ENCODE measurements at regions of chr2 and their contacts with region 1.

Region 1: DNA sequence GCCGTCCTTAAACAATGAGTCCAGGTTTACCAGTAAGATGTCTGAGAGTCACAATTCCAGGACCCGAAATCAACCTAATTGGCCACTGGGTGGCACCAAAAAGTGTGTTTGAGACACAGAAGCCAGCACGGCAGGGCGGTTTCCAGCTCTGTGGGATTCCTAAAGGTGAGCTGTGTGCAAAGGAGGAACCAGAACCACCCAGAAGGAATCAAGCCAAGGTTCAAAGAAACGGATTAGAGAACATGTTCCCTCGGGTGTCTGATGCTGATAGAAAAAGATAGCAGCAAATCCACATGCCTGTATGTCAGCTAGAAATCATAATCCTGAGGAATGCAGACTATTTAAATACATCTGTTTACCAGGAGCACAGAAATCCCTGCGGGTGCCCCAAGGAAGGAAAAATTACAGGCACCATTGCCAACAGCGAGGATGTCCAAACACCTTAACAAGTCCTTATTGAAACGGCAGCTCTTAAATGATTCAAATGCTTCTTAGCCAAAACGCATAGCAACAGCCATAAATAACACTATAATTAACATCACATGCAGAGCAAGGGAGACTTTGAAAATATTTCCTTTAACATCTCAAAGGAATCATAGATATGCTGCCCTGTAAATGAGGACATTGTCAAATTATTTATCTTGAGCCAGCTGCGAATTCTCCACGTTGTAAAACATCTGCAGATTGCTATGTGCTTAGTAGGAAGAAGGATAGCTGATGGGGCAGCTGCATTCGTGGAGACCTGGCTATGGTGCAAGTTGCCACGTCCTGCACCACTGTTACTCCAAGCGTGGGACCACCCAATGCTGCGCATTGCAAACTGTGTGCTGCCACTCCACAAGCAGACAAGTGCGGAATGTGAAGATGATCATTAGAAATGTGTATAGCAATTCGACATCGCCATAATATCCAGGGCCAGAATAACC is 318.7 kb upstream of the NCKAP5 start:
- DNase-seq: peak; percentile 52 to 96 (median 82)

Region 2: GRCh38 chr2:133247631-133248030 is 639.4 kb before region 1 on chr2:
- intact Hi-C with region 1: no loop called
- DNase-seq: no peak

Region 3: DNA sequence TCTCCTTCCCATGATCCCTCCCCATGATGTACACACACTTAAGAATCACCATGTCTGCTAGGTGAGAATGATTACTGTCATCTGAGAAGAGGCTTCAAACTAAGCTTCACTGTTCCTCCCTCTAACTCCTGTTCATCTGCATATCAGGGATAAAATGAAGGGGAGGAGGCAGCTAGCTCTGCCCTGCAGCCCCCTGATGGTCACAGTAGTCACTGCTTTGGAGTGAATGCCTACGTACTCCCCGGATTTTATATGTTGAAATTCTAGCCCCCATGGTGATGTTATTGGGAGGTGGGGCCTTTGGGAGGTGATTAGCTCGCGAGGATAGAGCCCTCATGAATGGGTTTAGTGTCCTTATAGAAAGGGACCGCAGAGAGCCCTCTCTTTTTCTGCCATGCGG is 475.1 kb before region 1 on chr2:
- intact Hi-C with region 1: no loop called
- DNase-seq: no peak

Region 4: GRCh38 chr2:133777607-133778006 is 109.4 kb before region 1 on chr2:
- intact Hi-C with region 1: no loop called
- DNase-seq: peak in 1 of 10 donors; percentile 50

Region 5: DNA sequence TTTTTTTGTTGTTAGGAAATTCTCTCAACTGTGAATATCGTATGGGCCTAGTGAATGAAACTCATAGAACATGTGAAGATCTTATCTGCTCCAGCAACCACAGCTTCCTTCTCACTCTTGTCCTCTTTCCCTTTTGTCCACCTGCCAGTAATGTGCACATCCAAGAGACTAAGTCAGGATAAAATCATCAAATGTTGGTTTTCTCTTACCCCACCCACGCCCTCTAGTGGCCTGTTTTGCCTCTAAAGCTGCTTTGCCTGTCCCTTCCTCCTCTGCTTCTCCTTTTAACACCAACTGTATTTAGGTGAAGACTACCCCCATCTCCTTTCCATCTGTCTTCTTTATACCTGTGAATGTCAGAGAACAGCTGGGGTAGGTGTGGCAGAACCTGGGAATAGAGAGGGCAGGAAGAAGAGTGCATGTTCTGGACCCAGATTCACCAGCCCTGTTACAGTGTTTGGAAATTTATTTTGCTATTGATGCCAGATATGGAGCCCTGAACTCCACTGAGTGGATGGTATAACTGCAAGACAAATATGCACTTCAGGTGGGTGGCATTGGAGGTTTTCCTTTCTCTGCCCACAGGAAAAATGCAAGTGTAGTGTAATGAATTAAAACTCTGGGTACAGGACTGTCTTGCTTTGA is 358.5 kb after region 1 on chr2:
- intact Hi-C with region 1: loop called (anchors 10 kb)
- DNase-seq: peak; percentile 36 to 92 (median 84)

Region 6: GRCh38 chr2:134411828-134412638 is 525.0 kb after region 1 on chr2:
- intact Hi-C with region 1: loop called (anchors 10 kb)
- DNase-seq: peak; percentile 71 to 97 (median 82)

Region 7: GRCh38 chr2:134454931-134455330 is 567.9 kb after region 1 on chr2:
- intact Hi-C with region 1: loop called (anchors 5 kb)
- DNase-seq: peak in 1 of 10 donors; percentile 43

Region 8: DNA sequence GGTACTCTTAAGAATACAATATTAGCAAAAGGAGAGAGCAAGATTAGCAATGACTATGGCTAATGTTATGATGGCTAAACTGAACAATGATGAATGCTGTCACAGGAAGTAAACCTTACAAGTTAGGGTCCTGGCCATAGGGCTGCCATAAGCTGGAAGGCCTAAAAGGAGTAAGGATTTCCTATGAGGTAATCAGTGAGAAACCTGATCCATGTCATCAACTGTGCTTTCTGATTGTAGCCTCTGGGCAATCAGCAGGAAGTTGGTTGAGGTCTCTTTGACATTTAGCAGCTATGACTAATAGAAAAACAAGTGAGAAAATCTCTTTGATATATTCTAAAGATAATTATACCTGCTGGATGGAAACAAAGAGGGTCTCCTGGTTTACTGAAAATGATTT is 1358.1 kb after region 1 on chr2:
- intact Hi-C with region 1: no loop called
- DNase-seq: no peak